ENCODE measurements at regions of chr10 and their contacts with region 1.

Region 1: GRCh38 chr10:101018600-101019439 is 12.1 kb downstream of the PDZD7 start:
- DNase-seq: peak; percentile 47 to 82 (median 67)
- ATAC-seq: peak; percentile 79
- H3K4me3 ChIP-seq: no peak overlapping the region
- H3K4me3 Mint-ChIP-seq: no peak overlapping the region
- H3K27ac ChIP-seq: no peak overlapping the region
- H3K27ac Mint-ChIP-seq: no peak overlapping the region
- H3K4me1 ChIP-seq: peaks cover 20% of the 10 kb centered on the region
- H3K4me1 Mint-ChIP-seq: peaks cover 11% of the 10 kb centered on the region
- H3K27me3 ChIP-seq: peaks cover 36 to 39% of the 10 kb centered on the region in 2 experiments
- H3K27me3 Mint-ChIP-seq: peaks cover 70% of the 10 kb centered on the region
- CTCF ChIP-seq: peak; percentile 60

Region 2: DNA sequence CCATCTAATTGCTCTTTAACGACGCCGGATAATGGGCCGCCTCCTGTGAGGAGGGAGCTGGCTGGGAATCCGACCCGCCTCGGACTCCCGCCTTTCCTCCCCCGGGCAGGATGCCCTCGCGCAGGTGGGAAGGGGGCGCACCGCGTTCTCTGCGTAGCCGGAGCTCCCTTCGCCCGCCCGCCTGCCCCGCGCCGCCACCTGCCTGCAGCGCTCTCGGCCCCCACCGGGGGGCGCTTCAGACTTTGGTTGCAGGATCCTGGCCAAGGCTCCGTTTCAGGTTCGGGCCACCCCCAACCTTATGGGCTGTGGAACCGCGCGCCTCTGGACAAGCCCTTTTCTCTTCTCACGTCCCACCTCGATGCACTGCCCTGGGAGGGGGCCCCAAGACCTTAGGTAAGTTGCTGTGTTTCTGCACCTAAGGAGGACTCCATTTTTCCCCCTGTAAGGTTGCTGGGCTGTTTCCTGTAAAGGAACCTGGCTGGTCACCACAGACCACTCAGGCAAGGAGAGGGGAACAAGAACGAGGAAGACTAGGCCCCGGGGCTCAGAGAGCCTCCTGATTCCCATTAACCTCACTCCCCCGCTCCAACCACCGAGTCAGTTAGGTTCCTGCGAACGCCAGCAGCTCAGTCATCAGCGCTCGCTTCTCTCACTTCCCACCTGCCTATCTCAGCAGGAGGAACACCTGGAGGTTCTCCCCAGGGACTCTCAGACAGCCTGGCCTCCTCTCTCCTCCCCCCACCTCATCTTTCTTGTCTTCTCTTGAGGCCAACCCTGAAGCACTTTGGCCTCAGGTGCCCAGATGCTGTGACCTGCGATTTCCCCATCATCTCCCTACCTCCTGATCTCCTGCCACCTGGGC is 31.6 kb after region 1 on chr10:
- CTCF ChIA-PET with region 1: interaction called, 12 read pairs
- POLR2A ChIA-PET with region 1: no interaction called
- intact Hi-C with region 1: no loop called
- DNase-seq: peak; percentile 57 to 85 (median 76)
- ATAC-seq: peak; percentile 98
- H3K4me3 ChIP-seq: no peak overlapping the region
- H3K4me3 Mint-ChIP-seq: peak overlapping the region; percentile 39
- H3K27ac ChIP-seq: no peak overlapping the region
- H3K27ac Mint-ChIP-seq: no peak overlapping the region
- H3K4me1 ChIP-seq: peaks cover 20% of the 10 kb centered on the region
- H3K4me1 Mint-ChIP-seq: peaks cover 14% of the 10 kb centered on the region
- H3K27me3 ChIP-seq: peaks cover 44 to 46% of the 10 kb centered on the region in 2 experiments
- H3K27me3 Mint-ChIP-seq: peaks cover 52% of the 10 kb centered on the region
- CTCF ChIP-seq: peak; percentile 76

Region 3: DNA sequence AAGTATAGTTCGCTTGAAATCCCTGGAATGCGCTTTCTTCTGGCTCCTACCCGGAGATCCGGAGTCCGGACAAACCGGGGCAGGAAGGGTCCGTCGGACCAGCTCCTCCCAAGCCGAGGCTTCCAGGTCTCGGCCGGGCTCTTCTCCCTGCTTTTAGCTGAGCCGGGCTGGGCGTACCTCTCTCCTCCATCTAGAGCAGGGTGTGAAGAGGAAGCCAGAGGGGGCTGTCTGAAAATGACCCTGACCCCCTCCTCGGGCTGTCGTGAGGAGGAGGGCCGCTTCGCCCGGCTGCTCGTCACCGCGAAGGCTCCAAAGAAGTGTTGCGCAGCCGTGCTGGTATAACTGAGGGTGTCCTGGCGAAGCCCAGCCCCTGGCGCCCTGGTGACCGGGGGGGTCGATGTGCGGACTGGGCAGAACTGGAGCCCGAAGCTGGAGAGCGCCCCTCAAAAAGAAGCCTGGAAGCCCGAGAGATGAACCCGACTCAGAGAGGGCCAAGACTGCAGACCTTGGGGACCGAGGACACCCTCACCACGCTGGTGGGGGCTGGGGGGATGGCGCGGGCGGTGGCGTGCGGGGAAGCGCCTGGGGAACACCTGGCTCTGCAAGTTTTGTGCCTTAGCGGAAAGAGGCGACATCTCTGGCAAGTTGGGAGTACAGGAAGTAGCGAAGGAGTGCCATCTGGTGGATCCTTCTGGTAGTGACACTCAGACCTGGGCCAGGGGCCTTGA is 48.7 kb after region 1 on chr10:
- CTCF ChIA-PET with region 1: interaction called, 11 read pairs
- POLR2A ChIA-PET with region 1: no interaction called
- intact Hi-C with region 1: loop called in 1 of 2 experiments (anchors 10 kb)
- DNase-seq: peak; percentile 61 to 88 (median 69)
- ATAC-seq: peak; percentile 83
- H3K4me3 ChIP-seq: peak overlapping the region; percentile 70
- H3K4me3 Mint-ChIP-seq: peak overlapping the region; percentile 93
- H3K27ac ChIP-seq: no peak overlapping the region
- H3K27ac Mint-ChIP-seq: no peak overlapping the region
- H3K4me1 ChIP-seq: peaks cover 34% of the 10 kb centered on the region
- H3K4me1 Mint-ChIP-seq: peaks cover 30% of the 10 kb centered on the region
- H3K27me3 ChIP-seq: peaks cover 52 to 59% of the 10 kb centered on the region in 2 experiments
- H3K27me3 Mint-ChIP-seq: peaks cover 63% of the 10 kb centered on the region
- CTCF ChIP-seq: peak; percentile 96

Region 4: GRCh38 chr10:101176577-101176976 is 157.8 kb after region 1 on chr10:
- CTCF ChIA-PET with region 1: no interaction called
- POLR2A ChIA-PET with region 1: no interaction called
- intact Hi-C with region 1: no loop called
- DNase-seq: no peak
- ATAC-seq: no peak
- H3K4me3 ChIP-seq: no peak overlapping the region
- H3K4me3 Mint-ChIP-seq: no peak overlapping the region
- H3K27ac ChIP-seq: no peak overlapping the region
- H3K27ac Mint-ChIP-seq: no peak overlapping the region
- H3K4me1 ChIP-seq: no peaks in the 10 kb centered on the region
- H3K4me1 Mint-ChIP-seq: no peaks in the 10 kb centered on the region
- H3K27me3 ChIP-seq: peaks cover 31 to 35% of the 10 kb centered on the region in 2 experiments
- H3K27me3 Mint-ChIP-seq: peaks cover 68% of the 10 kb centered on the region
- CTCF ChIP-seq: no peak